ENCODE measurements at regions of chr20 and their contacts with region 1.

Region 1: GRCh38 chr20:35207950-35208611 is 18.4 kb upstream of the MMP24 start:
- DNase-seq: peak; percentile 73 to 90
- ATAC-seq: peak; percentile 96

Region 2: DNA sequence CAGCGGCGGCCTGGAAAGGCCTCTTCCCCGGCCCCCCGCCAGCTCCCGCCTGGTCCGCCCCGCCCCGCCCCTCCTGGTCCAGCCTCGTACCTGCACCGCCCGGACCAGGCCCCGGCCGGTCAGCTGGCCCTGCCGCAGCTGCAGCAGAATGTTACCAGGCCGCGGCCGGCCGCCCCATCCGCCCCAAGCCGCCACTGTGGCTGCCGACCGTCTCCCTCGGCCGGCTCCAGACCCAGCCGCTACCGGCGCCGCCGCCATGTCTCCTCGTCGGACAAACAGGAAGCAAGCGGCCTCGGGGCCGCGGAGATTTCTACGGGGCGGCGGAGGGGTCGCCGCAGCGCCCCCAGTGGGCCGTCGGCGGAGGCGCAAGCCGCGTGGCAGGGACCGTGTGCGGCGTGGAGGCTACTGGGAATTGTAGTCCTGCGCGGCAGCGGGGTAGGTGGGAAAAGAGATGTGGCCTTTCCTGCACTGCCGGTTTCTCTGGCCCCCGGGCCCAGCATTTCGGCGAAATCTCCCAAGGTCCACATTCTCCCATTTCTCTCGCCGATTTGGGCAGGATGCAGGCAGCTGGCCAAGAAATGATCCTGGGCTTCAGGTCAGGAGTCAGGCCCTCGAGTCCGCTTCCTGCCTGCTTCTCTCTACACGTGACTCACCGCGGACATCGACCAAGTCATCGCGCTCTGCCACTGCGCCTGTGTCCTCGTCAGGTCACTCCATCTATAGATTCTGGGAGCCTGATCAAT is 115.4 kb before region 1 on chr20 and contains the start of gene TRPC4AP:
- intact Hi-C with region 1: loop called in 1 of 2 experiments (anchors 5 kb)
- DNase-seq: peak; percentile 84 to 93
- ATAC-seq: peak; percentile 94
- total RNA-seq, gene TRPC4AP: 58.9 to 60.6 TPM

Region 3: GRCh38 chr20:35146920-35147574 is 61.0 kb before region 1 on chr20 and contains the start of gene EDEM2:
- intact Hi-C with region 1: loop called in 1 of 2 experiments (anchors 10 kb)
- DNase-seq: peak; percentile 94
- ATAC-seq: peak; percentile 94
- total RNA-seq, gene EDEM2: 26.4 to 29.7 TPM